B cell (primary cell): ENCODE measurements at regions of chr11 and their contacts with region 1.

Region 1: DNA sequence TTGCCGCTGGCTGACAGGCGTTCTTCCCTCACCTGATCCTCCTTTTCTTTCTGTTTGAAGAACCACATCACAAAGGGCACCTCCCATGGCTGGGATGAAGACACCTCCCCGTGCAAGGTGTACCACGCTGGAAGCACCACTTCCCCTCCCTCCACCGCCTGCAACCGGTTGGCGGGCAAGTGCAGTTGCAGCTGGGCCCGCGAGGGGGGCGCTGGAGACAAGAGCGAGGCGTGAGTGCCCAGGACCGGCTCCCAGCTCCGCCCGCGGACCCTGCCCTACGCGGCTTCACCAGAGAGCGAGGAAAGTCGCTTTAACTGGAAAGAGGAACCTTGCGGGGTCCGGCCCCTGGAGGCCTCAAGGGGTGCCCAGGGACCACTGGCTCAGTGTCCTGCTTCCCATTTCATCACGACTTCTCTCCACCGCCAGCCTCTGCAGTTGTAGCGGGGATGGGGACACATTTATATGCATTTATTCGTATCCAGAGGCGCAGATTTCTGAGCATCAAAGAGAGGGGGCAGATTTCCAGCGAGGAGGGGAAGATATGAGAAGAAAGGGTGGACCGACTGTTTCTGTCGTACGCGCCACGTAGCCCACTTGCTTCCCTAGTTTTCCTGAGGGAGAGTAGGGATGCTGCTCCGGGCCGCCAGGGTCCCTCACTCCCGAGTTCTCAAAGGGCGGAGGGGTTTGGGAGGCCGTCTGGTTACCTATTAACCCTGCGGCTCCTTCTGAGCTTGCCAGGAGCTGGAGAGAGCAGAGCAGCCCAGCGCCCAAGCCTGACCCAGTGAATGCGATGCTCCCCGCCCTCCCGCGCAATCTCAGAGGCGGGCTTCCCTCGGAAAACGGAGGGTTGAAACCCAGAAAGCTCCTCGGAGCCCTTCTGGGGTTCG is 3.5 kb downstream of the ESAM start:
- DNase-seq: peak; percentile 83
- ATAC-seq: peak; percentile 67
- H3K4me3 ChIP-seq: peak overlapping the region in 4 of 5 experiments; percentile 27 to 81 (median 43)
- H3K4me3 Mint-ChIP-seq: peak overlapping the region; percentile 81
- H3K27ac ChIP-seq: peak overlapping the region in 1 of 2 donors; percentile 22
- H3K27ac Mint-ChIP-seq: no peak overlapping the region
- H3K4me1 ChIP-seq: peaks cover 38 to 53% of the 10 kb centered on the region in 2 donors
- H3K4me1 Mint-ChIP-seq: peaks cover 39% of the 10 kb centered on the region
- H3K27me3 ChIP-seq: peaks cover 0 to 22% (median 10%) of the 10 kb centered on the region in 4 experiments
- H3K27me3 Mint-ChIP-seq: peaks cover 11% of the 10 kb centered on the region
- CTCF ChIP-seq: peak; percentile 84

Region 2: DNA sequence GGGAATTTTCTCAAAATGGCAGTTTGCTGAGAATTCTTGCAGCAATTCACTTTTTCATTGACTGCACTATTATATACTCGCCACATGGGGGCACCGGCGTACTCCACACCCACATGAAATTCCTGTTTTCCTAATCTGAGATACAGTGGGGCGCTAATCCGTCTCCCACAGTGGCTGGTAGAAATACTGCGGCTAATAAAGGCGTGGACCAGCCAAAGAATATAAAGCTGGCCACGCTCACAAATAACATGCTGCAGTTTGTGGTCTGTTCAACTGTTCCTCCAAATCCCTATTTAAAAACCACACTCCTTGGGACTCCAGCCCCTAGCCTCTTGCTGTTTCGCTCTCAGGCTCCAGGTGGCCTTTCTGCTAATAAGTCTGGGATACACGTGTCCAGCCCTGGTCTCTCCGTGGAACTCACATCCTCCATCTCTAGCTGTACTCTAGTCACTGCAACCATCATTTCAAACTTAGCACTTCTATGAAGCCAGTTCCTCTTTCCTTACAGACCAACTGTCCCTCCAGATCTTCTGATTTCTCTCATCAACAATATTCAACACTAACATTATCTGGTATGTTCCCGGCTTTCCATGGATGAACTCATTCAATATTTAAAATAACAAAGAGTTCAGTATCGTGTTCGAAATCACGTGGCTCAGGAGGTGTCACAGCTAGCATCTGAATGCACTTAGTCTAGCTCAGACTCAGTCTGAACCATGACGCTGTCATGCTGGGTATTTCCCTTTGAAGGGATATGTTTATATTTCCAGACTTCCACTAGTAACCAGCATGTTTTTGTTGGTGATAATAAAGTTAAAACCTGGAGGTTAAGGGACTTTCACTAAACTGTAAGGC is 113.9 kb before region 1 on chr11:
- CTCF ChIA-PET with region 1: interaction called, 8 read pairs
- POLR2A ChIA-PET with region 1: no interaction called
- intact Hi-C with region 1: loop called (anchors 1 kb)
- DNase-seq: peak; percentile 67
- ATAC-seq: peak; percentile 83
- H3K4me3 ChIP-seq: no peak overlapping the region
- H3K4me3 Mint-ChIP-seq: peak overlapping the region; percentile 2
- H3K27ac ChIP-seq: no peak overlapping the region
- H3K27ac Mint-ChIP-seq: no peak overlapping the region
- H3K4me1 ChIP-seq: peaks cover 14 to 16% of the 10 kb centered on the region in 2 donors
- H3K4me1 Mint-ChIP-seq: peaks cover 16% of the 10 kb centered on the region
- H3K27me3 ChIP-seq: no peaks in the 10 kb centered on the region
- H3K27me3 Mint-ChIP-seq: no peaks in the 10 kb centered on the region
- CTCF ChIP-seq: peak; percentile 82

Region 3: DNA sequence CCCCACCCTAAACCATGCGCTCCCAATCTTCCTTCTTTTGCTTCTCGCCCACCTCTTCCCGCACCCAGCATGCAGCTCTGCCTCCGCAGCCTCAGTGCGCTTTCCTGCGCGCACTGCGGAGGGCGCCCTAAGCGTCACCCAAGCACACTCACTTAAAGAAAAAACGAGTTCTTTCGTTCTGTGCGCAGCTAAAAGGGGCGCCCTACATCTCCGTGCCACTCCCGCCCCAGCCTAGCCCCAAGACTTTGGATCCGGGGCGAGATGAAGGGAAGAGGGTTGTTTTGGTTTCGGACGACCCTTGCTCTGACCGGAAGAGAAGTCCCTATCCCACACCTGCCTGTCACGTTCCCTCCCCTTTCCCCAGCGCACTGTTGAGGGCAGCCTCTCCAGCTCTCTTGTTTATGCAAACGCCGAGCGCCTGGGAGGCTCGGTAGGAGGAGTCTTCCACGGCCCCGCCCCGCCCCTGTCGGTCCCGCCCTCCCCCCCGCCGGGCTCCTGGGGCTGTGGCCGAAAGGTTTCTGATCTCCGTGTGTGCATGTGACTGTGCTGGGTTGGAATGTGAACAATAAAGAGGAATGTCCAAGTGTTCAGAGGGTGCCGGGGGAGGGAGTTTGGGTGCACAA is 11.8 kb before region 1 on chr11:
- CTCF ChIA-PET with region 1: interaction called, 153 read pairs
- POLR2A ChIA-PET with region 1: interaction called, 9 read pairs
- intact Hi-C with region 1: loop called (anchors 1 kb)
- DNase-seq: peak; percentile 90
- ATAC-seq: peak; percentile 90
- H3K4me3 ChIP-seq: peak overlapping the region; percentile 62 to 97 (median 83)
- H3K4me3 Mint-ChIP-seq: peak overlapping the region; percentile 99
- H3K27ac ChIP-seq: peak overlapping the region; percentile 43 to 59
- H3K27ac Mint-ChIP-seq: peak overlapping the region; percentile 97
- H3K4me1 ChIP-seq: peaks cover 24 to 42% of the 10 kb centered on the region in 2 donors
- H3K4me1 Mint-ChIP-seq: peaks cover 35% of the 10 kb centered on the region
- H3K27me3 ChIP-seq: peaks cover 0 to 3% (median 0%) of the 10 kb centered on the region in 4 experiments
- H3K27me3 Mint-ChIP-seq: no peaks in the 10 kb centered on the region
- CTCF ChIP-seq: peak; percentile 67

Region 4: GRCh38 chr11:124793466-124794278 is 35.1 kb after region 1 on chr11:
- CTCF ChIA-PET with region 1: interaction called, 60 read pairs
- POLR2A ChIA-PET with region 1: interaction called, 3 read pairs
- intact Hi-C with region 1: loop called (anchors 2 kb)
- DNase-seq: peak; percentile 67
- ATAC-seq: no peak
- H3K4me3 ChIP-seq: no peak overlapping the region
- H3K4me3 Mint-ChIP-seq: no peak overlapping the region
- H3K27ac ChIP-seq: no peak overlapping the region
- H3K27ac Mint-ChIP-seq: no peak overlapping the region
- H3K4me1 ChIP-seq: peaks cover 3 to 8% of the 10 kb centered on the region in 2 donors
- H3K4me1 Mint-ChIP-seq: peaks cover 21% of the 10 kb centered on the region
- H3K27me3 ChIP-seq: no peaks in the 10 kb centered on the region
- H3K27me3 Mint-ChIP-seq: no peaks in the 10 kb centered on the region
- CTCF ChIP-seq: peak; percentile 78